ENCODE measurements at regions of chr5 and their contacts with region 1.

Region 1: DNA sequence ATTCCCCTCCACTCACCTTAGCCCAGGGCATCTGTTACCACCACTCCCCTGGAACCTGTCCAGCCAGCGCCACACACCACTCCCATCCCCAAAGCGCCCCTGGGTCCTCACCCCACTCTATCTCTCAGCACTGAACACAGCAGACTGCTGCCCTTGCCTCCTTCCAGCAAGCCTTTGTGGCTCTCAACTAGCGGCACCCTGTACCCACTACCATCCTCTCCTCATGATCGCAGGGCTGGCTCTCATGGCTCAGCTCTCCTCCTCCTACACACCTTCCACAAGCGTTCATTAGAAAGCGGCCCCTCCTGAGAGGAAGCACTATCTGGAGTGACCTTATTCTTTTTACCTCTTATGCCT is 13.3 kb upstream of the BASP1 start:
- DNase-seq: no peak
- ATAC-seq: peak in 1 of 4 donors; percentile 33
- H3K4me3 ChIP-seq: no peak overlapping the region
- H3K27ac ChIP-seq: no peak overlapping the region
- H3K4me1 ChIP-seq: peaks cover 0 to 3% (median 0%) of the 10 kb centered on the region in 12 donors
- H3K27me3 ChIP-seq: peaks cover 0 to 52% (median 11%) of the 10 kb centered on the region in 9 donors
- CTCF ChIP-seq: no peak
- POLR2A ChIP-seq: no peak

Region 2: DNA sequence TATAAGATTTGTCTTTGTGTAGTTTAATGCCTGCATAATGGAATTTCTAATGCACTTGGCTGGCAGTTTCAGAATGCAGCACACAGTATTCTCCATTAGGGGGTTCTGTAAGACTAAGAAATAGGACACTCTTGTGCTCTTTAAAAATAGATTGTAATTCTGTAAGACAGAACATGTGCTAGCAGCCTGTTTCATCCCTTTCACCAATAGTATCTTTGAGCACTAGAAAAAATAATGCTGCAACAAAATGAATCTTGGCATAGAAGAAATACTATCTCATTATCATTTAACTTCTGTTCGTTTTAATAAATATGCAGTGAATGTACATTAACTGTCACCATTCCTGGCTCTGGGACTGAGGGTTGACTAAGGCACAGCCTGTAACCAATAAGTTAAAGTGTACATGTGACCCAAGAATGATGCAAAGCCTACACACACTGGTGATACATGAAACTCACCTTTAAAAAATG is 714.8 kb before region 1 on chr5:
- intact Hi-C with region 1: loop called in 6 of 10 experiments (anchors 10 kb)
- DNase-seq: no peak
- ATAC-seq: peak; percentile 56 to 75 (median 72)
- H3K4me3 ChIP-seq: no peak overlapping the region
- H3K27ac ChIP-seq: peak overlapping the region in 9 of 12 donors; percentile 11 to 82 (median 78)
- H3K4me1 ChIP-seq: peaks cover 0 to 56% (median 20%) of the 10 kb centered on the region in 12 donors
- H3K27me3 ChIP-seq: no peaks in the 10 kb centered on the region
- CTCF ChIP-seq: peak; percentile 18 to 83 (median 70)
- POLR2A ChIP-seq: no peak